OCI-LY7 (cell line): ENCODE measurements at regions of chr12 and their contacts with region 1.

Region 1: DNA sequence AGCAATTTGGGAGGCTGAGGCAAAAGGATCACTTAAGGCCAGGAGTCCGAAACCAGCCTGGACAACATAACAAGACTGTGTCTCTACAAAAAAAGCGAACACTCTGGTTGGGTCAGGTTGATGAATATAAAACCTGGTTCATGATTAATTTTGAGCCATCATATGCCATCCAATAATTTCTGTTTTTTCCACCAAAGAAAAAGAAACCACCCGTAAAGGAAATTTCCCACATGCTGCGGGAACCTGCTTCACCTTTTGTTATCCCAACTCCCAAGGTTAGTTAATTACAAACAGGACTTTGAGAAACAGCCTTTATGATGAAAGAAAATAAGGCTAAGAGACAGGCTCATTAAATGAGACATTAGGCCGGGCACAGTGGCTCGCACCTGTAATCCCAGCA is 24.1 kb upstream of the BICDL1 start:
- DNase-seq: no peak
- H3K4me3 ChIP-seq: no peak overlapping the region
- H3K27ac ChIP-seq: no peak overlapping the region
- H3K4me1 ChIP-seq: no peaks in the 10 kb centered on the region
- CTCF ChIP-seq: no peak

Region 2: DNA sequence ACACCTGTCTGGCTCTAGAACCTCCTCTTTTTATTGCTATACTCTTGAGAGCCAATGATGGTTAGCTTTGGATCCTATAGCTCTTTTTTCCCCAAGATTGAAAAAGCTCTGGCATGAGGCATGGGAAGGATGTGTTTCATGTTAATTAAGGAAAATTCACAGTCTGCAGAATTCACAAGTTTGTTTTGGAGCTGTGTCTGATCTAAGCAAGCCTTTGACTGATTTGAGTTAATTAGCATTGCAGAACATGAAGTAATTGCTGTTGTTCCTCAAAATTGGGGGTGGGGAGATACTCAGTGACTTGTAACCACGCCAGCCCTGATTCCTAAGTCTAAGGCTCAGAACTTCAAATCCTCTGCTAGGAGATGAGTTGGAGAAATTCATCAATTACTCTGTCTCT is 1383.6 kb before region 1 on chr12:
- CTCF ChIA-PET with region 1: no interaction called
- POLR2A ChIA-PET with region 1: no interaction called
- intact Hi-C with region 1: no loop called
- DNase-seq: no peak
- H3K4me3 ChIP-seq: no peak overlapping the region
- H3K27ac ChIP-seq: no peak overlapping the region
- H3K4me1 ChIP-seq: no peaks in the 10 kb centered on the region
- CTCF ChIP-seq: no peak

Region 3: DNA sequence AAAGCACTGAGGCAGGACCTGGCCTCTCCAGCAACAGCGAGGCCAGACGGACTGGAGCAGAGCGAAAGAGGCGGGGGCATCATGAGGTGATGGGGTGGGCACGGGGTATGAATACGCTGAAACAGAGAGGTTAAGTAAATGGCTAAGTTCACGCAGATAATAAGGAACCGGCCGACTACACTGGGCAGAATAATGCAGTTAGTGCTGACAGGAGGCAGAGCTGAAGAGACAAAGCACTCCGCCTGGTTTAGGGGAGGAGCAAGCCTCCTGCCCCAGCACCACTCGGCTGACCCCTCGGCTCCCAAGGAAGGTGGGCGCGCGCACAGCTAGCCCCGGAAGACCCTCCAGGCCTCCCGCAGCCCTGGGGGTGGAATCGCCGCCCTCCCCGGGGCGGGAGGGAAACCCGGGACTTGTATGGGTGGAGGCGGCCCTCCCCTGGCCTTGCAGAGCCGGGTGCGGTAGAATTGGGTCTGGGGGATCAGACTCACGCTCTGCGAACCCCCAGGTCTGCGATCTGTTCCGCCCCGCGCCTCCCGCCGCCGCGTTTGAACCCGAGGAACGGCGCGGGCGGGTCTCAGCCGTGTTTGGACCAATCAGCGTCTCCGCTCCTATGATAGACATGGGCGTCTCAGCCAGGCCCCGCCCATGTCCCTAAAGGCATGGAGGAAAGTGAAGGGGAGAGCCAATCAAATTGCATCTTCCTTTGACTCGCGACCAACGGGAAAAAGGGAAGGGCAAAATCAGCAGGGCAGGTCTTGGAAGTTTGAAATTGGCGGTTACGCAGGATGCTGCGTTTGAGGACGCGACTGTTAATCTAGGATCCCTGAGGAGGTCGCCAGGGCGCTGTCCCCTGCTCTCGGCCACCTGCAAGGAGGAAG is 87.9 kb before region 1 on chr12 and contains the start of gene CIT:
- CTCF ChIA-PET with region 1: no interaction called
- POLR2A ChIA-PET with region 1: no interaction called
- intact Hi-C with region 1: no loop called
- DNase-seq: peak; percentile 95
- H3K4me3 ChIP-seq: peak within 1 kb of the TSS; percentile 86
- H3K27ac ChIP-seq: peak within 1 kb of the TSS; percentile 52
- H3K4me1 ChIP-seq: peaks cover 12% of the 10 kb centered on the region
- CTCF ChIP-seq: no peak
- total RNA-seq, gene CIT: 33.4 and 74.4 TPM in 2 replicates

Region 4: DNA sequence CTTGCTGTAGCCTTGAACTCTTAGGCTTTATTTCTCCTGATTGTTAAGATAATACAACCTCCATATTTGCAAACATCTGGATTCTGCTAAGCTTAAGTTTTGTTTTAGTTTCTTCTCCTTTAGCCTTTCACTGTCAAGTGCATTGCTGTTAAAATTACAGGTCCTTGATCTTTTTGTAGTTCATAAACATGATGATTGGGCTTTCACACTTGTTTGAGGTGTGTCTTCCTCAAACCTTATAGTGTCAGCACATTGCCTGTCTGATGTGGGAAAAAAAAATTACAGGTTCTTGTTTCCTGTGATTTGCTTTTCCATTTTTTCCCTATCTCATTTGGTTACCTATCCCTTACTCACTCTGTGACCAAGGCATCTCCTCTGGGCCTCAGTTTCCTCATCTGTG is 83.3 kb after region 1 on chr12:
- CTCF ChIA-PET with region 1: no interaction called
- POLR2A ChIA-PET with region 1: interaction called, 10 read pairs
- intact Hi-C with region 1: no loop called
- DNase-seq: no peak
- H3K4me3 ChIP-seq: no peak overlapping the region
- H3K27ac ChIP-seq: no peak overlapping the region
- H3K4me1 ChIP-seq: no peaks in the 10 kb centered on the region
- CTCF ChIP-seq: no peak